Panc1 (cell line): ENCODE measurements at regions of chr1 and their contacts with region 1.

Region 1: GRCh38 chr1:107405236-107405635 is 264.4 kb downstream of the NTNG1 start:
- DNase-seq: no peak
- ATAC-seq: no peak
- H3K4me3 ChIP-seq: no peak overlapping the region
- H3K27ac ChIP-seq: no peak overlapping the region
- H3K4me1 ChIP-seq: no peaks in the 10 kb centered on the region
- H3K27me3 ChIP-seq: no peaks in the 10 kb centered on the region
- CTCF ChIP-seq: no peak

Region 2: GRCh38 chr1:107342316-107342715 is 62.9 kb before region 1 on chr1:
- CTCF ChIA-PET with region 1: no interaction called
- POLR2A ChIA-PET with region 1: no interaction called
- in situ Hi-C with region 1: no loop called
- intact Hi-C with region 1: loop called (anchors 10 kb)
- DNase-seq: no peak
- ATAC-seq: no peak
- H3K4me3 ChIP-seq: no peak overlapping the region
- H3K27ac ChIP-seq: no peak overlapping the region
- H3K4me1 ChIP-seq: no peaks in the 10 kb centered on the region
- H3K27me3 ChIP-seq: no peaks in the 10 kb centered on the region
- CTCF ChIP-seq: no peak

Region 3: DNA sequence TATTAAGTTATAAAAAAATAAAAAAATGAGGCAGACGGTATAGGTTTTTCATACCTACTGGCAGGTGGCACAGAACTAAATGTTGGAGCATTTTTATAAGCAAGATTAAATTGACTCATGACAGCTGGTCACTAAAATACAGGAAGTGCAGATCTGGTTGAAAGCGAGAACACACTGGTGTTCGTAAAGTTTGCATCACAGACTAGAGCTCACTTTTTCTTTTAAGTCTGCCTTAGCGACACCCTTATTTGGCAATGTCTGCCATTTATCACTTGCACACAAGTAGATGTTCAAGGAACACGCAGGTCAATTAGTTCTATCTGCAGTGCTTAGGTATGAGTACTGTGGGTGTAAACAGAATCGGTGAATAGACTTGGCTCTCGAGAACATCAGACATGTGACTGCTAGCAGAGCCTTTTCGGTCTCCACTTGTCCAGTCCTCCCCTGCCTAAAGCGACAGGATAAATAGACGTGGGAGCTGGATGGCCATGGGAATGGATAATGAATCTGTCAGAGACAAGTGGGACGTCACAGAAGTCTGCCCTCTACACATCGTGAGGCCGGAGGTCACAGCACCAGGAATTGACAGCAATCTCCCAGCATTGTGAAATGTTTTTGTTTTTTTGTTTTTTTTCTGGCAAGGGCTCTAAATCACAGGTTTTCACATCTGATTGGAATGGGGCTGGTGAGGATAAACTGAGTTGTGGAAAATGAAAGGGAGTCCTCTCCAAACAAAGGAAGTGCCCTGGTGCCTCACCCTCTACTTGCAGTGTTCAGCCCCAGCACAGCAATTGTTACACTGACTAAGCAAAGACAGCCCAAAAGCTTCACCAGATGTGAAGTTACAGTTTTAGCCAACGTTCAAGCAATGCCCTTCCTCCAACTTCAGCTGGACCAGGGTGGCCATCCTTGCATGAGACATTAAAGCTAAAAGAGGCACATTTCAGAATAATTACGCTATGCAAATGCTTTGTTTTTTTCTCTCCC is 15.5 kb before region 1 on chr1:
- CTCF ChIA-PET with region 1: no interaction called
- POLR2A ChIA-PET with region 1: no interaction called
- in situ Hi-C with region 1: no loop called
- intact Hi-C with region 1: no loop called
- DNase-seq: no peak
- ATAC-seq: no peak
- H3K4me3 ChIP-seq: no peak overlapping the region
- H3K27ac ChIP-seq: no peak overlapping the region
- H3K4me1 ChIP-seq: no peaks in the 10 kb centered on the region
- H3K27me3 ChIP-seq: no peaks in the 10 kb centered on the region
- CTCF ChIP-seq: no peak